ENCODE measurements at regions of chr6 and their contacts with region 1.

Region 1: DNA sequence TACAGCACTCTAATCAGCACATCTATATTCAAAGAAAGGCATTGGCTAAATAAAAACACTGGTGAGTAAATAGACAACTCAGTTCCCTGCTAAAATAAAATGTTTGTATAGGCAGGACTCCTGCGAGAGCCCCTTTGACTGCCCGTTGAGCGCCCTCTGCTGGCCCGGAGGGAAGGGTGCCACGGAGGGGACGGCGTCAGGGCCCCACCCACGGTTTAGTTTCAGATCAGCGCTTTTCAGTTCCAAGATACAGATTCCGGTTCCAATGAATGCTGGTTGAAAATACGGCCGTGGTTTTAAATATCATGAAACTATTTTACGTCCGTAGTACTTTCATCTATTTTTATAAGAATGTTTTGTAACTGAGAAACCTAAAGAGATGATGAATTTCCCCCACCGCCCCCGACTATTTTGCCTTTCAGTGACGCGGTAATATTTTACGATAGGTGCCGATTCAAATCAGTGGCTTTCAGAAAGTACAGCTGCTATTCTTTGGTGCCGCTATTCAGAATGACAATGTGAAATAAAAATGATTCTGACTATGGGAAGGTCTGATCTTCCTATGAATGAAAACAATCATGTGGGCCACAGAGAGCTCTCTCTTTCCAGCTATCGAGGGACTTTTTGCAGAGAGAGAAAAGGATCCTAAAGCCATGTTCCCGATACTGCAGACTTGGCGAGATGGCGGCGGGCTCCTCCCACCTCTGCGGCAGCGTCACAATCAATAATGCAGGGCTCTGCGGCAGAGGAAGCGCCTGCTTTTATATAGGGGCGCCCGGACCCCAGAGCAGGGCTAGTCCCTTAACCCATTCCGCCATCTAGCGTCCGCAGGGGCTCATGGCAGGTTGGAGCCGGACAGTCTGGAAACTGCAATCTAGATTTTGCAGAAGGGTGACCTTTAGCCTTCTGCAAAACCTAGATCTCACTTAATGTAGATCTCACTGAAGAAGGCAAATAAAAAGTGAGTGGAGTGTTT is 10.6 kb upstream of the CCN6 start:
- DNase-seq: peak; percentile 77 to 80
- H3K4me3 ChIP-seq: peak overlapping the region; percentile 64
- H3K27ac ChIP-seq: peak overlapping the region; percentile 42
- H3K4me1 ChIP-seq: 0 out of 2 replicates have a peak, but pooled peaks cover 4% of the 10 kb centered on the region
- H3K27me3 ChIP-seq: no peaks in the 10 kb centered on the region
- CTCF ChIP-seq: peak; percentile 96

Region 2: GRCh38 chr6:111011360-111012142 is 1031.8 kb before region 1 on chr6:
- CTCF ChIA-PET with region 1: interaction called, 3 read pairs
- POLR2A ChIA-PET with region 1: no interaction called
- intact Hi-C with region 1: loop called (anchors 1 kb)
- DNase-seq: peak in 1 of 2 experiments; percentile 9
- H3K4me3 ChIP-seq: no peak overlapping the region
- H3K27ac ChIP-seq: no peak overlapping the region
- H3K4me1 ChIP-seq: no peaks in the 10 kb centered on the region
- H3K27me3 ChIP-seq: no peaks in the 10 kb centered on the region
- CTCF ChIP-seq: peak; percentile 80

Region 3: DNA sequence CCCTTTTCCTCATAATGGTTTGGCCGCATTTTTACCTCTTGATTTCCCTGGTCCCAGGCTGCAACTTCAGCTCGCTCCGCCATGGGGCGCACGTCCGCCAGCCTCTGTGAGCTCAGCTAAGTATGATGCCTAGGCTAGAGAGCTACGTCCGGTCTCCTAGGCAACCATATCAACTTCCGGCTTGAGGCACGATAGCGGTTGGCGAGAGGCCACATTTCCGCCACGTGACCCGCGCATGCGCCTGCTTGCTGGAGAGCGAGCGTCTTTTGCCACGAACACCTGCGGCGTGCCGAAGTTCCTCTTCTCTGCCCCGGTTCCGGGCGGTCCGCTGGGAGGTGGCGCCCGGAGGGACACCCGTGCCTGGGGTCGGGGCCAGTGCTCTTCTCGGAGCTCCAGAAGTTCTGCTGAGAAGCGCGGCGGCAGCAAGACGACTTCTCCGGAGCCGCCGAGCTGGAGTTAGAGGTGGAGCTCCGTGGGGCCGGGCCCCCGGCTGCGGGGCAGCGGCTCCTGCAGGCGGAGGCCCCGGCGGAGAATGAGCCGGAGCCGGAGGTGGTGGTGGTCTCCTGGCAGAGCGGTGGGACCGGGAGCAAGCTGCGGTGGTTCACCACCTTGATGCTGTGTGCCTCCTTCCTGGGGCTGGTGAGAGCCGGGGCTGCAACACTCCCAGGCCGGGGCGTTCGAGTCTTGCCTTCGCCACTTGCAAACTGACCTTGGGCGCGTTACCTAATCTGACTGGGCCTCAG is 784.1 kb before region 1 on chr6:
- CTCF ChIA-PET with region 1: interaction called, 8 read pairs
- POLR2A ChIA-PET with region 1: no interaction called
- intact Hi-C with region 1: loop called (anchors 1 kb)
- DNase-seq: peak; percentile 97 to 98
- H3K4me3 ChIP-seq: peak overlapping the region; percentile 84
- H3K27ac ChIP-seq: peak overlapping the region; percentile 58; the same call in 1 of the 2 replicates
- H3K4me1 ChIP-seq: peaks cover 34% of the 10 kb centered on the region
- H3K27me3 ChIP-seq: no peaks in the 10 kb centered on the region
- CTCF ChIP-seq: peak; percentile 96

Region 4: GRCh38 chr6:111483736-111484632 is 559.3 kb before region 1 on chr6:
- CTCF ChIA-PET with region 1: no interaction called
- POLR2A ChIA-PET with region 1: no interaction called
- intact Hi-C with region 1: loop called (anchors 10 kb)
- DNase-seq: peak; percentile 75 to 88
- H3K4me3 ChIP-seq: peak overlapping the region; percentile 66
- H3K27ac ChIP-seq: peak overlapping the region; percentile 90
- H3K4me1 ChIP-seq: peaks cover 42% of the 10 kb centered on the region
- H3K27me3 ChIP-seq: no peaks in the 10 kb centered on the region
- CTCF ChIP-seq: no peak

Region 5: GRCh38 chr6:111591104-111591900 is 452.0 kb before region 1 on chr6:
- CTCF ChIA-PET with region 1: no interaction called
- POLR2A ChIA-PET with region 1: no interaction called
- intact Hi-C with region 1: loop called (anchors 1 kb)
- DNase-seq: peak; percentile 90 to 97
- H3K4me3 ChIP-seq: peak overlapping the region; percentile 21; the same call in 1 of the 2 replicates
- H3K27ac ChIP-seq: peak overlapping the region; percentile 96
- H3K4me1 ChIP-seq: peaks cover 69% of the 10 kb centered on the region
- H3K27me3 ChIP-seq: no peaks in the 10 kb centered on the region
- CTCF ChIP-seq: no peak

Region 6: DNA sequence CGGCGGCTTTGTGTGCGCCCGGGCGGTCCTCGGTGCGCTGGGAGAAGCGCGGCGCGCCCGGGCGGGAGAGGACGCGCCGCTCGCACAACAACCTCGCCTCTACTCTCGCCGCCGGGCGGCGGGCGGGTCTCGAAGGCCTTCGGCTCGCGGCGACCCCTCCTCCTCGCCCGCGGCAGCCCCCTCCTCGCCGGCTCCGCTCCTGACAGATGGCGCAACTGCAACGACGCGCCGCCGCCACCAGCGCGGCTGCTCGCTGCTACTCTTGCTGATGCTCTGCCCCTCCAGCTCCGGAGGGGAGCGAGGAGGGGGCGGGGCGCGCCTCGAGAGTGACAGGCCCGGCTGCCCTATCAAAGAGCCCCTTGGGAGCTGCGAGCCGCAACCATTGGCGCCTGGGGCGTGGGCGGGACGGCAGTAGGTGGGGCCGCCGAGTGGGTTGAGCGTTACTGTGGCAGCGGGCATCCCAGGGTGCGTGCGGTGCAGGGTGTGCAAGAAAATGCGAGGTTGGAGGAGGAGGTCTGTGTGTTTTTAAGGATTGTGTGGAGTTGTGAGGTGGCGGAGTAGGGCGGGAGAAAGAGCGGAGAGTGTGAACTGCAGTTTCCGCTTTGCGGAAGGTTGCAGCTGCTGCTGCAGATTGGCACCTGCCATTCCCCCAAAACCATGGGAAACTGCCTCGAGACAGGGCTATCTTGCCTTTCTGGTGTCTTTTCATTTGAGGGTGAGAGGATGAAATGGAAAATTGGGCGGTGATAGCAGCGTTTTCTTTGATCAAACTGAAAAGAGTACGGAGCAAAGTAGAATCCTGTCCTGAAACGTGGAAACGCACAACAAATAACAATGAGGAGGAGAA is 169.9 kb before region 1 on chr6 and contains the start of gene FYN:
- CTCF ChIA-PET with region 1: no interaction called
- POLR2A ChIA-PET with region 1: no interaction called
- intact Hi-C with region 1: loop called (anchors 2 kb)
- DNase-seq: peak; percentile 95 to 98
- H3K4me3 ChIP-seq: peak within 1 kb of the TSS; percentile 76
- H3K27ac ChIP-seq: peak within 1 kb of the TSS; percentile 49
- H3K4me1 ChIP-seq: peaks cover 28% of the 10 kb centered on the region
- H3K27me3 ChIP-seq: no peaks in the 10 kb centered on the region
- CTCF ChIP-seq: no peak
- total RNA-seq, gene FYN: 53.3 and 80.3 TPM in 2 replicates

Region 7: GRCh38 chr6:111909238-111909637 is 134.1 kb before region 1 on chr6:
- CTCF ChIA-PET with region 1: no interaction called
- POLR2A ChIA-PET with region 1: no interaction called
- intact Hi-C with region 1: no loop called
- DNase-seq: no peak
- H3K4me3 ChIP-seq: no peak overlapping the region
- H3K27ac ChIP-seq: no peak overlapping the region
- H3K4me1 ChIP-seq: no peaks in the 10 kb centered on the region
- H3K27me3 ChIP-seq: no peaks in the 10 kb centered on the region
- CTCF ChIP-seq: no peak